ENCODE measurements at regions of chr9 and their contacts with region 1.

Region 1: DNA sequence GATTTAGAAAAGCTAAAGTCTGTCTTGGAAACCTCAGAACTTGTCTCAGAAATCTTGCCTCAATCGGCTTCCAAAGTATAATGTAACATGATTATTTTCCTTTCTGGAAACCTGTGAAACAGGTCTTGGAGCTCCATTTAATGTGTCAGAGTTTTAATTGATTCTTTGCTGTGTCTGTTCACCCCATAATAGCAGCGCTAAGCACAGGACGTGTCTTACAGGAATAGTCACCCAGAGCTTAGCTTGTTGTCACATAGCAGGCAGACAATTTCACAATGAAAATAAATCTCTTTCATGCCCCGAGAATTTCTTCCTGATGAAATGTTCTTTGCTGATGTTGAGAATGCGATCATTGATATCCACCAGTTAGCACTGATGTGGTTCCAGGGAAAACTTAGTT is 40.2 kb upstream of the PTPN3 start:
- DNase-seq: no peak
- H3K4me3 Mint-ChIP-seq: no peak overlapping the region
- H3K27ac Mint-ChIP-seq: no peak overlapping the region
- H3K4me1 Mint-ChIP-seq: peaks cover 22% of the 10 kb centered on the region
- H3K27me3 Mint-ChIP-seq: no peaks in the 10 kb centered on the region
- CTCF ChIP-seq: no peak

Region 2: GRCh38 chr9:108885643-108886348 is 652.5 kb before region 1 on chr9:
- CTCF ChIA-PET with region 1: no interaction called
- POLR2A ChIA-PET with region 1: no interaction called
- intact Hi-C with region 1: no loop called
- DNase-seq: peak; percentile 96
- H3K4me3 Mint-ChIP-seq: no peak overlapping the region
- H3K27ac Mint-ChIP-seq: peak overlapping the region; percentile 35
- H3K4me1 Mint-ChIP-seq: peaks cover 18% of the 10 kb centered on the region
- H3K27me3 Mint-ChIP-seq: no peaks in the 10 kb centered on the region
- CTCF ChIP-seq: no peak

Region 3: DNA sequence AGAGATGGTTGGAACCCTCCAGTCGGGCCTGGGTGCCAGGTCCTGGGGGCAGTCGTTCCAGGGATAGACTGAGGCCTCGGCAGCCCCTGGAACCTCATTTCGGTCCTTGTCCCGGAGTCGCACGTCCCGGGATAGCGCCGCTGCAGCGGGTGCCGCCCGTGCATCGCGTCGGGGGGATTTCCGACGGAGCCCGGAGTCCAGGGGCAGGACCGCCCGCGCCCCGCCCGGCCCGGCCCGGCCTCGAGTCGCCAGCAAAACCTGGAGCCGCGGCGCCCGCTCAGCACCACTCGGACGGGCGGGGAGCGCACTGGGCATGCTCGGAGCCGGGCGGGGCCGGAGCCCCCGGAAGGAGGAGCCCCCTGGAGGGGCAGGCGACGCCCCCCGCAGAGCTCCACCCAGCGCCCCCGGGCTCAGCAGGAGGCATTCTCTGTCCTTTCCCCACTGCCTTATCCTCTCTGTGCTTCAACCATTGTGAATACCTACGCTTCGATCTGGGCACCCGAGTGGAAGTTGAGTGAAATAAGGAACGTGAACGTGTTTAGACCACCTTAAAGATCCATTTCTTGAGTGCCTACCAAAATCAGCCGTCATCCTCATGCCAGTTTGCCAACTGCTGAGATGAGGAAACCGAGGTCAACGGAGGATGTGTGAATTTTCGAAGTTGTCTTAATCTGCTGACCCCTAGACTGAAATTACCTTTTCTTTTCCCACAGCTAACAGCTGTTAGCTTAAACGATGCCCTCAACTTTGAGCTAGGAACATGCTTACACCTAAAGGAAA is 38.5 kb before region 1 on chr9:
- CTCF ChIA-PET with region 1: no interaction called
- POLR2A ChIA-PET with region 1: interaction called, 3 read pairs
- intact Hi-C with region 1: loop called (anchors 2 kb)
- DNase-seq: no peak
- H3K4me3 Mint-ChIP-seq: peak overlapping the region; percentile 69
- H3K27ac Mint-ChIP-seq: no peak overlapping the region
- H3K4me1 Mint-ChIP-seq: peaks cover 8% of the 10 kb centered on the region
- H3K27me3 Mint-ChIP-seq: peaks cover 27% of the 10 kb centered on the region
- CTCF ChIP-seq: no peak

Region 4: GRCh38 chr9:109556061-109556460 is 17.7 kb after region 1 on chr9:
- CTCF ChIA-PET with region 1: interaction called, 4 read pairs
- POLR2A ChIA-PET with region 1: interaction called, 26 read pairs
- intact Hi-C with region 1: no loop called
- DNase-seq: peak; percentile 65
- H3K4me3 Mint-ChIP-seq: peak overlapping the region; percentile 1
- H3K27ac Mint-ChIP-seq: peak overlapping the region; percentile 66
- H3K4me1 Mint-ChIP-seq: peaks cover 58% of the 10 kb centered on the region
- H3K27me3 Mint-ChIP-seq: no peaks in the 10 kb centered on the region
- CTCF ChIP-seq: no peak